Left lung (tissue), 14 donors: ENCODE measurements at regions of chr3 and their contacts with region 1.

Region 1: GRCh38 chr3:138915503-138916498 is 31.1 kb downstream of the FOXL2 start:
- DNase-seq: peak; percentile 91 to 99 (median 95)
- ATAC-seq: peak; percentile 96
- H3K4me3 ChIP-seq: peak overlapping the region; percentile 49 to 80
- H3K27ac ChIP-seq: peak overlapping the region; percentile 89 to 98
- H3K4me1 ChIP-seq: peaks cover 6 to 16% of the 10 kb centered on the region in 2 donors
- H3K27me3 ChIP-seq: no peaks in the 10 kb centered on the region
- CTCF ChIP-seq: peak; percentile 94 to 98

Region 2: GRCh38 chr3:138314751-138315150 is 601.0 kb before region 1 on chr3:
- intact Hi-C with region 1: no loop called
- DNase-seq: no peak
- ATAC-seq: no peak
- H3K4me3 ChIP-seq: no peak overlapping the region
- H3K27ac ChIP-seq: no peak overlapping the region
- H3K4me1 ChIP-seq: no peaks in the 10 kb centered on the region
- H3K27me3 ChIP-seq: no peaks in the 10 kb centered on the region
- CTCF ChIP-seq: no peak

Region 3: GRCh38 chr3:138594150-138594934 is 321.5 kb before region 1 on chr3 and contains the start of gene CEP70:
- intact Hi-C with region 1: loop called in 1 of 2 experiments (anchors 2 kb)
- DNase-seq: peak; percentile 93 to 98 (median 96)
- ATAC-seq: peak; percentile 96
- H3K4me3 ChIP-seq: peak within 1 kb of the TSS; percentile 62 to 66
- H3K27ac ChIP-seq: peak within 1 kb of the TSS; percentile 78 to 88
- H3K4me1 ChIP-seq: peaks cover 0 to 24% of the 10 kb centered on the region in 2 donors
- H3K27me3 ChIP-seq: peaks cover 0 to 14% of the 10 kb centered on the region in 2 donors
- CTCF ChIP-seq: peak; percentile 83 to 91
- polyA plus RNA-seq, gene CEP70: 48.0 to 63.5 (median 55.4) TPM

Region 4: DNA sequence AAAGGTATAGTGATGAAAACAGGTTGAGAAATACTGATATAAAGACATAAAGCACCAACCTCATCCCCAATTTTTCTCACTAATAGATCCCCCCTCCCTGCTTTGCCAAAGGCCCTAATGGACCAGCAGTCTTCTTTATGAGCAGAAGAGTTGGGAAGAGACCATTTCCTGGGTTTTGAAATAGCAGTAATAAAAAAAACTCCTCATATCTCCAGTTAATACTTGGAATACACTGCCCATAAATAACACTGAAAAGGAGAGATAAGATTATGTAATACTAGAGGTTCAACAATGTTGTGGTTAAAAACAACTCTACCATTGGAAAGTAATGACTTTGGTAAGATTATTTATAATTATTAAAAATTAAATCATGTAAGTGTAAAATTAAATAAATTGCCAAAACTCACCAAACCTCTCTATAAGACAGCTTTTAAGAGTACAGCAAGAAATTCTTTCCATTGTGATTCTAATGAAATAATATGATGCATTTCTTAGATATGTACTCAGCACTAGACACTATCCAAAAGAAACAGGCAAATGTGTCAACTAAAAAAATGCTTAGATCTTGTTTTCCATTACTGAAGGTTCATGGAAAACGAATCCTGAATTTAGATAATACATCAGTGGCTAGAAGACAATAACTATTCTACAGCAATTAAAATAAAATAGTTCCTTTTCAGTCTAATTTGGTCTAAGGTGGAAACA is 219.0 kb before region 1 on chr3:
- intact Hi-C with region 1: loop called in 1 of 2 experiments (anchors 5 kb)
- DNase-seq: no peak
- ATAC-seq: no peak
- H3K4me3 ChIP-seq: no peak overlapping the region
- H3K27ac ChIP-seq: no peak overlapping the region
- H3K4me1 ChIP-seq: no peaks in the 10 kb centered on the region
- H3K27me3 ChIP-seq: no peaks in the 10 kb centered on the region
- CTCF ChIP-seq: no peak

Region 5: GRCh38 chr3:138774529-138775253 is 141.1 kb before region 1 on chr3:
- intact Hi-C with region 1: no loop called
- DNase-seq: peak in 3 of 4 donors; percentile 44 to 85 (median 67)
- ATAC-seq: peak; percentile 95
- H3K4me3 ChIP-seq: no peak overlapping the region
- H3K27ac ChIP-seq: peak overlapping the region; percentile 41 to 61
- H3K4me1 ChIP-seq: peaks cover 0 to 18% of the 10 kb centered on the region in 2 donors
- H3K27me3 ChIP-seq: no peaks in the 10 kb centered on the region
- CTCF ChIP-seq: no peak

Region 6: DNA sequence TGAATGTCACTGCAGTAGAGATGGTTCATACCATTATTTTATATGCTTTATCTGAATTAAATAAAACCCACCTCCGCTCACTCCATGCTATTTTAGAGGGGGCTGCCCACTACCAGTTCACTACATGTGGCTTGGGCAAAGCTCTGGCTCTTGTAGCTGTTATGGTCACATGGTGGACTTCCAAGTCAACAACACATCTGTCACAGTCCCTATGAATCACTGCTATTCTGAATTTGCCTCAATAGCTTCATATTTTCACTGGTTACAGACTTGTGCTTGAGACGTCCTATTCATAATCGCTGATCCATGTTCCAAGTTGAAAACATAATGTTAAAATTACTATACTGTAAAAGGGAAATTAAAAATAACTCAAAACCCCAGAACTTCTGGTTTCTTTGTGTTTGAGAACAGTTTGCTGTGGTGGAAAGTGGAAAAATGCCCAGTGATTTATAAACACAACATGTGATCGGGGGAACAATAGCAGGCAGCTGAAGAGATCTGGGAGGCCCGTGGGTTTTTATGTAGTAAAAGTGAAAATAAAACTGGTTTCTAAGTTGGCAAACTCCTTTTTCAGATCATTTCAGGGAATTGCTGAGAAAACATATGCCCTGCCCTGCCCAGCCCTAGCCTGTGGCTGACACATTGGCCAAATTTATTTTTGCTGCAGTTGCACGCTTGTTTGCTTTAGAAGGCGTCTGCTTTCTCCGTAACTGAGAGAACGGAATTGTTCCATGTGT is 257.7 kb after region 1 on chr3:
- intact Hi-C with region 1: no loop called
- DNase-seq: peak in 1 of 4 donors; percentile 7
- ATAC-seq: peak; percentile 60
- H3K4me3 ChIP-seq: no peak overlapping the region
- H3K27ac ChIP-seq: no peak overlapping the region
- H3K4me1 ChIP-seq: no peaks in the 10 kb centered on the region
- H3K27me3 ChIP-seq: no peaks in the 10 kb centered on the region
- CTCF ChIP-seq: no peak

Region 7: GRCh38 chr3:139588450-139588849 is 672.6 kb after region 1 on chr3:
- intact Hi-C with region 1: no loop called
- DNase-seq: no peak
- ATAC-seq: no peak
- H3K4me3 ChIP-seq: no peak overlapping the region
- H3K27ac ChIP-seq: no peak overlapping the region
- H3K4me1 ChIP-seq: no peaks in the 10 kb centered on the region
- H3K27me3 ChIP-seq: no peaks in the 10 kb centered on the region
- CTCF ChIP-seq: no peak